GM12878 (cell line): ENCODE measurements at regions of chr9 and their contacts with region 1.

Region 1: DNA sequence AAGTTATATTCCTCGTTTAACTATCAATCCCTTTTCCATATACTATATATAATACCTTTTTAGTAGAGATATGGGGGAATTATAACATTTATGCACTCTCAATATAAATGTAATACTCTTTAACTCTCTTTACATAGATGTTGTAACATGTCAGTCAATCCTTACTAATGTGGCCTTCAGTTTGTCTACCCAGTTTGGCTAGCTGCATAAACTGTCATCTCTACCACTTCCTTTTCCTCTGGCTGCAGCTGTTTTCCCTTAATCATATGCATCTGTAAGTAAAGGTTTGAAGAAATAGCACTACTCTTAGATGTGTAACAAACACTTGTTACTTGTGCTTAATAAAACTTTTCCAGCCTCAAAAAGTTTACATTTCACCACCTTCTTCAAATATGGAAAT is 13.4 kb downstream of the ABHD17B start:
- DNase-seq: no peak
- ATAC-seq: peak; percentile 52
- H3K4me3 ChIP-seq: no peak overlapping the region
- H3K27ac ChIP-seq: no peak overlapping the region
- H3K4me1 ChIP-seq: peaks cover 49% of the 10 kb centered on the region
- H3K27me3 ChIP-seq: no peaks in the 10 kb centered on the region
- CTCF ChIP-seq: no peak
- EP300 ChIP-seq: no peak
- POLR2A ChIP-seq: no peak
- RAD21 ChIP-seq: no peak

Region 2: GRCh38 chr9:71885467-71885866 is 12.1 kb before region 1 on chr9:
- CTCF ChIA-PET with region 1: interaction called, 10 read pairs
- POLR2A ChIA-PET with region 1: no interaction called
- RAD21 ChIA-PET with region 1: interaction called, 3 read pairs
- SMC1A ChIA-PET with region 1: interaction called, 15 read pairs
- in situ Hi-C with region 1: no loop called
- intact Hi-C with region 1: no loop called
- DNase-seq: no peak
- ATAC-seq: no peak
- H3K4me3 ChIP-seq: no peak overlapping the region
- H3K27ac ChIP-seq: no peak overlapping the region
- H3K4me1 ChIP-seq: no peaks in the 10 kb centered on the region
- H3K27me3 ChIP-seq: no peaks in the 10 kb centered on the region
- CTCF ChIP-seq: no peak
- EP300 ChIP-seq: no peak
- POLR2A ChIP-seq: no peak
- RAD21 ChIP-seq: no peak

Region 3: GRCh38 chr9:71916834-71917534 is 19.4 kb after region 1 on chr9:
- CTCF ChIA-PET with region 1: interaction called, 5 read pairs
- POLR2A ChIA-PET with region 1: interaction called, 8 read pairs
- RAD21 ChIA-PET with region 1: interaction called, 22 read pairs
- SMC1A ChIA-PET with region 1: interaction called, 13 read pairs
- in situ Hi-C with region 1: no loop called
- intact Hi-C with region 1: no loop called
- DNase-seq: no peak
- ATAC-seq: peak; percentile 85
- H3K4me3 ChIP-seq: no peak overlapping the region; the same call in 1 of the 2 replicates
- H3K27ac ChIP-seq: no peak overlapping the region
- H3K4me1 ChIP-seq: peaks cover 10% of the 10 kb centered on the region
- H3K27me3 ChIP-seq: no peaks in the 10 kb centered on the region
- CTCF ChIP-seq: no peak
- EP300 ChIP-seq: no peak
- POLR2A ChIP-seq: no peak
- RAD21 ChIP-seq: no peak

Region 4: GRCh38 chr9:72065076-72065475 is 167.5 kb after region 1 on chr9:
- CTCF ChIA-PET with region 1: no interaction called
- POLR2A ChIA-PET with region 1: no interaction called
- RAD21 ChIA-PET with region 1: no interaction called
- SMC1A ChIA-PET with region 1: no interaction called
- in situ Hi-C with region 1: no loop called
- intact Hi-C with region 1: no loop called
- DNase-seq: no peak
- ATAC-seq: no peak
- H3K4me3 ChIP-seq: no peak overlapping the region
- H3K27ac ChIP-seq: no peak overlapping the region
- H3K4me1 ChIP-seq: no peaks in the 10 kb centered on the region
- H3K27me3 ChIP-seq: no peaks in the 10 kb centered on the region
- CTCF ChIP-seq: no peak
- EP300 ChIP-seq: no peak
- POLR2A ChIP-seq: no peak
- RAD21 ChIP-seq: no peak

Region 5: DNA sequence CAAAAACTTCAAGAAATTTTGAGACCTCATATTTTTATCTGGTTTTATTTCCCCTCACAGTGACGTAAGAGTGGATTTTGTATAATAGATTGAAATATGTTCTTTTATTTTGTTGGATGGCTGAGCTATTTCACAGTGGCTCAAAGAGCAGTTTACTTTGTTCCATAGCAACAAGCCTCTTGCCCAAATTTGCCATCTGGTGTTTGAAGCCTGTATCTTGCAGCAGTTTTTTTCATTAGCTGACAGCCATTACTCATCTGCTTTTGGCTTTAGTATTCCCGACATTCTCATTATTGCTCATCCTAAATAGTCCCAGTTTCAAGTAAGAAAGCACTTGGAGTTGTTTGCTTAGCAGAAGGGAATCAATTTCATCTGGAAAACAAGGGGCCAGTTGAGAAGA is 288.0 kb after region 1 on chr9:
- CTCF ChIA-PET with region 1: no interaction called
- POLR2A ChIA-PET with region 1: no interaction called
- RAD21 ChIA-PET with region 1: no interaction called
- SMC1A ChIA-PET with region 1: no interaction called
- in situ Hi-C with region 1: no loop called
- intact Hi-C with region 1: no loop called
- DNase-seq: no peak
- ATAC-seq: no peak
- H3K4me3 ChIP-seq: no peak overlapping the region
- H3K27ac ChIP-seq: no peak overlapping the region
- H3K4me1 ChIP-seq: no peaks in the 10 kb centered on the region
- H3K27me3 ChIP-seq: no peaks in the 10 kb centered on the region
- CTCF ChIP-seq: no peak
- EP300 ChIP-seq: no peak
- POLR2A ChIP-seq: no peak
- RAD21 ChIP-seq: no peak